ENCODE measurements at regions of chr18 and their contacts with region 1.

Region 1: GRCh38 chr18:62425465-62426195 is 97.2 kb upstream of the ZCCHC2 start:
- DNase-seq: peak; percentile 70 to 90
- H3K4me3 ChIP-seq: peak overlapping the region; percentile 52; the same call in 1 of the 2 replicates
- H3K27ac ChIP-seq: peak overlapping the region; percentile 71
- H3K4me1 ChIP-seq: peaks cover 18% of the 10 kb centered on the region
- H3K27me3 ChIP-seq: no peaks in the 10 kb centered on the region
- CTCF ChIP-seq: peak; percentile 90

Region 2: DNA sequence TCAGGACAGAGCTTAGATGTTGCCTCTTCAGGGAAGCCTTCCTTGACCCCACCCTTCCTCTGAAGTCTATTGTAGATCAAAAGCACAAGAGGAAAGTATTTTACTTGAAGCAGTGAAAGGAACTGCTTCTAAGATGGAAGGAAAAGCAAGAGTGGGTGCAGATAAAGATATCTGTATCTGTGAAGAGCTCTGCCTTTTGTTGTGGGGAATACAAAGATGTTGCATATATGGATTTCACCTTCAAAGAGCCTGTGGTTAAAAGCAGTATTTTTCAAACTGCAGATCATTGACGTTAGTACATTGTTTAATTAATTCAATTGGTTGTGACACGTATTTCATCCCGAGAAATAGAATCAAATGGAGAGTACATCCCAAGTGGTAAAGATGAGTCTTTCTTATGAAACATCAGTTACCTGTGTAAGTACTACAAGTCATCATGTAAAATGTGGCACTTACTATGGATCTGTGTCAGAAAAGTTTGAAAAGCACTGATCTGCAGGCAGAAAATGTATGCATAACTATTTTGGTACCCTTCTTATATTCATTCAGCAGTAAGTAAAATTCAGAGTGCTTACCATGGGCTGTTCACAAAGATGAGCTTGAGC is 125.2 kb before region 1 on chr18:
- CTCF ChIA-PET with region 1: interaction called, 26 read pairs
- POLR2A ChIA-PET with region 1: no interaction called
- intact Hi-C with region 1: no loop called
- DNase-seq: no peak
- H3K4me3 ChIP-seq: no peak overlapping the region
- H3K27ac ChIP-seq: no peak overlapping the region
- H3K4me1 ChIP-seq: no peaks in the 10 kb centered on the region
- H3K27me3 ChIP-seq: no peaks in the 10 kb centered on the region
- CTCF ChIP-seq: no peak

Region 3: GRCh38 chr18:62388855-62389760 is 36.5 kb before region 1 on chr18:
- CTCF ChIA-PET with region 1: no interaction called
- POLR2A ChIA-PET with region 1: no interaction called
- intact Hi-C with region 1: loop called (anchors 2 kb)
- DNase-seq: peak; percentile 47 to 96
- H3K4me3 ChIP-seq: peak overlapping the region; percentile 4; the same call in 1 of the 2 replicates
- H3K27ac ChIP-seq: peak overlapping the region; percentile 51
- H3K4me1 ChIP-seq: peaks cover 29% of the 10 kb centered on the region
- H3K27me3 ChIP-seq: no peaks in the 10 kb centered on the region
- CTCF ChIP-seq: no peak

Region 4: GRCh38 chr18:62450546-62451406 is 25.1 kb after region 1 on chr18:
- CTCF ChIA-PET with region 1: no interaction called
- POLR2A ChIA-PET with region 1: no interaction called
- intact Hi-C with region 1: loop called (anchors 1 kb)
- DNase-seq: peak; percentile 75 to 95
- H3K4me3 ChIP-seq: no peak overlapping the region; the same call in 1 of the 2 replicates
- H3K27ac ChIP-seq: peak overlapping the region; percentile 92
- H3K4me1 ChIP-seq: peaks cover 48% of the 10 kb centered on the region
- H3K27me3 ChIP-seq: no peaks in the 10 kb centered on the region
- CTCF ChIP-seq: no peak

Region 5: GRCh38 chr18:62512532-62512931 is 86.9 kb after region 1 on chr18:
- CTCF ChIA-PET with region 1: no interaction called
- POLR2A ChIA-PET with region 1: no interaction called
- intact Hi-C with region 1: no loop called
- DNase-seq: no peak
- H3K4me3 ChIP-seq: no peak overlapping the region
- H3K27ac ChIP-seq: no peak overlapping the region
- H3K4me1 ChIP-seq: peaks cover 20% of the 10 kb centered on the region
- H3K27me3 ChIP-seq: no peaks in the 10 kb centered on the region
- CTCF ChIP-seq: no peak

Region 6: DNA sequence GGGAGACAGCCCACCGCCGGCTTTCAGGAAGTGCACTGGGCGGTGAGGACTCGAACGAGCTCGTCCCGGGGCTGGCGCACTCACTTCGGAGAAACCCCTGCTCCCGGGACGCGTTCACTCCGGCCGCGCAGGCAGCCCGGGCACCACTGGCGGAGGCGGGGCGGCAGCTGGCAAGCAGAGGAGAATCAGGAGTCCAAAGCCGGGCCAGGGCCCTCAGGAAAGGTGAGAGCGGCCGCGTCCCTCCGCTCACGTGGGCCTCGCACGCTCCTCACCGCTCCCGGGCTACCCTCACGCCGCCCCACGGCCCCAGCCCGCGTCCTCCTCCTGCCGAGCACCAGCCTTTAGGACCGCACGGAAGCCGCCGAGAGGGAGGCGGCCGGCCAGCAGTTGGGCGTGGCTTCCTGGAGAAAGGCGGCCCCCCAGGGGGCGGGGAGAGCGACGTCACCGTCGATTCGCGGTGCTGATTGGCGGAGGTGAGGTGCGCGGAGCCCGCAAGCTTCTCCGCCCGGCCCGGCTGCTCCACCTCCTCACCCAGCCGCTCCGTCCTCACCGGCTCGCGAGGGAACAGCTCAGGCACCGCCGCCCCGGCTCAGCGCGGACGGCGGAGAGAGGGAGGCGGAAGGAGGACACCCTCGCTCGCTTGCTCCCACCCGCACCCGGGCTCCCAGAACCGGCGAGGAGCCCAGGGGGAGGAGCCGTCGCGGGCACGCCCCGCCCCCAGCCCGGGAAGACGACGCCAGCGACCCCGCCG is 97.0 kb after region 1 on chr18 and contains the start of gene ZCCHC2:
- CTCF ChIA-PET with region 1: interaction called, 3 read pairs
- POLR2A ChIA-PET with region 1: no interaction called
- intact Hi-C with region 1: loop called (anchors 2 kb)
- DNase-seq: peak; percentile 88 to 96
- H3K4me3 ChIP-seq: peak within 1 kb of the TSS; percentile 95
- H3K27ac ChIP-seq: peak within 1 kb of the TSS; percentile 53
- H3K4me1 ChIP-seq: peaks cover 30% of the 10 kb centered on the region
- H3K27me3 ChIP-seq: no peaks in the 10 kb centered on the region
- CTCF ChIP-seq: no peak
- total RNA-seq, gene ZCCHC2: 12.0 and 18.1 TPM in 2 replicates

Region 7: DNA sequence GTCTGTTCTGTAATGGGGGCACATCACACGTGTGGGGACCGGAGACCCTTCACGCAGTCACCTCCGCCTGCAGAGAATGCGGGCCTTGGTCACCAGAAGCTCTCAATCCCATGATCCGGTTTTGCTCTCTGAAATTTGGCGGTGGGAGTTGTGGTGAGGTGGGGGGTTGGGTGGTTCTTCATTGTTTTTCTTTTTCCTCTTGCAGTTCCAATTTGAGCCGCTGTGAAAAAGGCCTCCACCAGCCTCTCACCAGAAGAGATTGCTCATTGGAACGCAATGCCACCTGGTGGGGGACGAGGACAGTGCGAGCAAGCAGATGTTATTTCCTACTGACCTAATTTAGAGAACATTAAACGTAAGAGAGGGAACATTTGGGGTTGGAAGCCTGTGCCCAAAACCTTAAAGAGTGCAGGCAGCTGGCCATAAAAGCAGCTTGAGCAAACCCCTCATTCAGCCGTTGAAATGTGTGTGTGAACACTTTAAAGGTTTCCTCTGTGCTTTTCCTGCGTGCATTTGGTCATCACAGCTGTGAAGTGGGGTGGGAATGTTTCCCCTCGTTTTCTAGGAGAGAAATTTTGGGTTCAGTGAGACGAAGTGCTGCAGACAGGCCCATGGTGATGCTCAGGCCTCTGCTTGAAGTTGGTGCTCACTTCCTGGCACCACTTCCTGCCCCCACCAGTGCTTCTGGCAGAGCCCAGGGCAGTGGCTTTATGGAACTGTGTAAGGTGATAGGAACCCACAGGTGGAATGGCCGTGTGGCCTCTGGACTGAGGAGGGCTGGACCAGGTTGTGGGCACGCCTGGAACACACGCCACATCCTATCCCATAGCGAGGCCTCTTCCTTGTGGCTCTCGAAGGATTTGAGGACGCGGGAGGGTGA is 158.9 kb after region 1 on chr18:
- CTCF ChIA-PET with region 1: no interaction called
- POLR2A ChIA-PET with region 1: no interaction called
- intact Hi-C with region 1: loop called (anchors 1 kb)
- DNase-seq: peak; percentile 68 to 75
- H3K4me3 ChIP-seq: no peak overlapping the region
- H3K27ac ChIP-seq: no peak overlapping the region
- H3K4me1 ChIP-seq: no peaks in the 10 kb centered on the region
- H3K27me3 ChIP-seq: no peaks in the 10 kb centered on the region
- CTCF ChIP-seq: peak; percentile 93